ENCODE measurements at regions of chr3 and their contacts with region 1.

Region 1: DNA sequence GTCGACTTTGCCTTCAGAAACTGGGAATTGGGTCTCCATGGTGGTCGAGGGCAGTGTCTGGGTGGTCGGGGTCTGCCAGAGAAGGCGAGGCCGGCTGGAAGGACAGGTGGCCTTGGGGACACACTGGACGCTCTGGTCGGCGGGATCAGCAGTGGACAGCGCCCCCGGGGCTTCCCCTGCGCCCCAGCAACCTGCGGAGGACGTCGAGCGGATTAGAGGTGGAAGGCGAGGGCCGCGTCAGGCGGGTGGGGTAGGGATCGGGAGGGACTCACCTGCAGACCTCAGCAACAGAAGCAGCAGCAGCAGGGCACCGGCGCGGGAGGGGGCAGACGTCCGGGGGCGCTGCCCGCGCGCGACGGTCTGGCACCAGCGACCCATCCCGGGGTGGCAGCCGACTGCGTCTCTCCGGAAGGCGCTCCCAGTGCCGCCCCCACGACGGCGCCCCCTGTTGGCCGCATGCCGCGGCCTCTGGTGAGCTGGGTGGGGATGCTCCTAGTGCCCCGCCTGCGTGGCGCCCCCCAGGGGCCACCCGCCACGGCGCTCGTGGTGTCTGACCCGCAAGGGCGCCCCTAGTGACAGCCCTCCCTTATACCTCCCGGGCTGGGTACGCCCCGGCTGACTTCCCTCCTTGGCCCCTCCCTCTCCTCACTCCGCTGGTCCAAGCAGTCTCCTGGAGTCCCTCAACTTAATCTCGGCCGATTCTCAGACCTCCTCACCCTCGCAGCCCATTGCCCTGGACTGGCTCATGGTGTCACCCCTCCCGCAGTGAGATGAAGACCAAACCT is at the start of gene PRSS50:
- DNase-seq: peak in 1 of 2 experiments; percentile 96
- H3K4me3 ChIP-seq: no peak within 1 kb of the TSS
- H3K27ac ChIP-seq: no peak within 1 kb of the TSS
- H3K4me1 ChIP-seq: no peaks in the 10 kb centered on the region; a peak in 1 of 7 replicates
- H3K27me3 ChIP-seq: no peaks in the 10 kb centered on the region; a peak in 2 of 7 replicates
- CTCF ChIP-seq: peak in 2 of 3 experiments; percentile 98 to 100; a peak in 3 of 4 replicates
- EP300 ChIP-seq: peak in 1 of 2 experiments; percentile 37; a peak in 1 of 3 replicates
- POLR2A ChIP-seq: no peak
- RAD21 ChIP-seq: peak; percentile 56 to 69; a peak in 3 of 4 replicates
- total RNA-seq, gene PRSS50: 0.47 and 0.73 TPM in 2 replicates

Region 2: GRCh38 chr3:46655271-46655670 is 62.4 kb before region 1 on chr3:
- CTCF ChIA-PET with region 1: no interaction called
- POLR2A ChIA-PET with region 1: no interaction called
- DNase-seq: no peak
- H3K4me3 ChIP-seq: no peak overlapping the region
- H3K27ac ChIP-seq: no peak overlapping the region
- H3K4me1 ChIP-seq: peaks cover 2 to 15% (median 13%) of the 10 kb centered on the region in 4 experiments; a peak in 5 of 7 replicates
- H3K27me3 ChIP-seq: no peaks in the 10 kb centered on the region
- CTCF ChIP-seq: no peak
- EP300 ChIP-seq: no peak
- POLR2A ChIP-seq: no peak
- RAD21 ChIP-seq: no peak

Region 3: GRCh38 chr3:46695177-46695961 is 22.3 kb before region 1 on chr3:
- CTCF ChIA-PET with region 1: interaction called, 12 read pairs
- POLR2A ChIA-PET with region 1: interaction called, 3 read pairs
- DNase-seq: peak in 1 of 2 experiments; percentile 78
- H3K4me3 ChIP-seq: no peak overlapping the region
- H3K27ac ChIP-seq: no peak overlapping the region
- H3K4me1 ChIP-seq: peaks cover 0 to 24% (median 19%) of the 10 kb centered on the region in 4 experiments; a peak in 6 of 7 replicates
- H3K27me3 ChIP-seq: peaks cover 2 to 35% (median 21%) of the 10 kb centered on the region in 4 experiments
- CTCF ChIP-seq: peak in 2 of 3 experiments; percentile 71 to 86; a peak in 3 of 4 replicates
- EP300 ChIP-seq: no peak
- POLR2A ChIP-seq: no peak
- RAD21 ChIP-seq: peak; percentile 52 to 62

Region 4: DNA sequence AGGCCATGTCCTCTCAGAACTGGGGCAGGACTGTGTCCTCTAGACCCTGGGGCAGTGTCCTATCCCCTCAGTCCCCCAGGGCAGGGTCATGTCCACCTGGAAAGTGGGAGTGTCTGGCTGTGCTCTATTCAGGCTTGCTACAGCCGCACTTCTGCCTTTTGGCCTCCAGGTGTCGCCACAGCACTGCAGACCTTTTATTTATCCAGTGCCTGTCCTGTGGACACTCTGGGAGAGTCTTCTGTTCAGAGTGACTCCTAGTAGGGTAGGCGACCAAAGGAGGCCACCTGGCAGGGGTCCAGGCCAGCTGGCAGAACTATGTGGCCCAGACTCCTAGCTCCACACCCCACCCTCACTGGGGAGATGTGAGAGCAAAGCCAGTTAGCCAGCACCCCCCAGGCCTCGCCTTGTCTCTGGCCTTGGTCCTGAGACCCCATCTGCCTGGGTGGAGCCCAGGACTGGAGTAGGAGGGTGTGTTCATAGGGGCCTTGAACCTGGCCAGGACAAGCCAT is 12.6 kb before region 1 on chr3:
- CTCF ChIA-PET with region 1: interaction called, 59 read pairs
- POLR2A ChIA-PET with region 1: interaction called, 3 read pairs
- DNase-seq: peak in 1 of 2 experiments; percentile 88
- H3K4me3 ChIP-seq: no peak overlapping the region
- H3K27ac ChIP-seq: no peak overlapping the region
- H3K4me1 ChIP-seq: peaks cover 0 to 9% (median 2%) of the 10 kb centered on the region in 4 experiments; a peak in 4 of 7 replicates
- H3K27me3 ChIP-seq: peaks cover 2 to 21% (median 19%) of the 10 kb centered on the region in 4 experiments; a peak in 6 of 7 replicates
- CTCF ChIP-seq: peak in 2 of 3 experiments; percentile 90 to 97; a peak in 3 of 4 replicates
- EP300 ChIP-seq: no peak
- POLR2A ChIP-seq: no peak
- RAD21 ChIP-seq: peak; percentile 97 to 98

Region 5: DNA sequence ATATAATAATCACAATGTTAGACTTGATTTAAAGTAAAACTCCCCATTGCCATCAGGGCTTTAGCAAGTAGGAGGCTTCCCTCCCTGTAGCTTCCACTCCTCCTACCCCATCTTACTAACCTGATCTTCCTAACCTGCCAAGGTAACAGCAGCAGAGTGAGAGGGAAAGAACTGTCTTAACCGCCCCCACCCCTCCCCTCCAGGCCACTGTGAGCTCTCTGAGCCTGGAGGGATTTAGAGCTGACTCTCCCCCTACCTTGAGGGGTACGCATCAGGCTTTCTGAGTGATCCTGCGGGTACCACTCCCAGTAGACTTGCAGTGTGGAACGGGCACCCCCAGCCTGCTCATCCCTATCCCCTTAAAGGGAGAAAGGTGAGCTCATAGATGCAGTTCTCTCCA is 11.4 kb after region 1 on chr3:
- CTCF ChIA-PET with region 1: interaction called, 22 read pairs
- POLR2A ChIA-PET with region 1: no interaction called
- DNase-seq: peak in 1 of 2 experiments; percentile 43
- H3K4me3 ChIP-seq: no peak overlapping the region
- H3K27ac ChIP-seq: no peak overlapping the region
- H3K4me1 ChIP-seq: peaks cover 0 to 5% (median 0%) of the 10 kb centered on the region in 4 experiments; a peak in 2 of 7 replicates
- H3K27me3 ChIP-seq: no peaks in the 10 kb centered on the region
- CTCF ChIP-seq: no peak
- EP300 ChIP-seq: no peak
- POLR2A ChIP-seq: no peak
- RAD21 ChIP-seq: no peak

Region 6: GRCh38 chr3:46874430-46874829 is 156.8 kb after region 1 on chr3:
- CTCF ChIA-PET with region 1: interaction called, 17 read pairs
- POLR2A ChIA-PET with region 1: no interaction called
- DNase-seq: no peak
- H3K4me3 ChIP-seq: no peak overlapping the region
- H3K27ac ChIP-seq: no peak overlapping the region
- H3K4me1 ChIP-seq: peaks cover 0 to 9% (median 0%) of the 10 kb centered on the region in 4 experiments; a peak in 2 of 7 replicates
- H3K27me3 ChIP-seq: peaks cover 3 to 49% (median 36%) of the 10 kb centered on the region in 4 experiments
- CTCF ChIP-seq: no peak
- EP300 ChIP-seq: no peak
- POLR2A ChIP-seq: no peak
- RAD21 ChIP-seq: no peak